AG04449 (cell line): ENCODE measurements at regions of chr5 and their contacts with region 1.

Region 1: GRCh38 chr5:82364497-82364896 is 86.3 kb upstream of the RPS23 start:
- DNase-seq: peak; percentile 34
- H3K4me3 ChIP-seq: no peak overlapping the region
- CTCF ChIP-seq: peak; percentile 59

Region 2: GRCh38 chr5:82375531-82376244 is 11.2 kb after region 1 on chr5:
- CTCF ChIA-PET with region 1: interaction called, 11 read pairs
- POLR2A ChIA-PET with region 1: interaction called, 4 read pairs
- DNase-seq: no peak
- H3K4me3 ChIP-seq: no peak overlapping the region
- CTCF ChIP-seq: no peak

Region 3: DNA sequence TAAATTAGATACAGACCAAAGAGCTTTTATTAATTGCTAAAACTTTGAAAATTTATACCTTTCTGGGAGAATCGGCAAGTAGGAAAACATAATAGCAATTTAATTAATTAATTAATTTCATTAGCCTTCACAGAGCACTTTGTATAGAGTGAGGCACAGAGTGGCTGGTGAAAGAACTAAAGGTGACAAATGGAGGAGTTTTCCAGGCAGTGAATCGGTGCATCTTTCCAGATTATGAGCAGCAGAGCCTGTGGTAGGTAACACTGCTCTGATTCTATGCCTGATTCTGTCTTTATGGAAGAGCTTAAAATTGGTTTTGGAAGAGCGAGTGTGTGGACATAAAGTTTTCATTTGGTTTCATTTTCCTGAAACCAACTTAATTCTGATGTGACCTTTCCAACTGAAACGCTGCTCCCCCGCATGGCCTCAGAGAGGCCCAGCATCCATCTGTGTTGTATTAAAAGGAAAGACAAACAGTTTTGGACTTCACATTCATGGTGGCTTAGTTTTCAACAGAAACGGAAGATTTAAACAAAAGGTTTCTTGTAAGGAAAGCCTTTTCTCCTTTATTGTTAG is 102.6 kb after region 1 on chr5:
- CTCF ChIA-PET with region 1: interaction called, 13 read pairs
- POLR2A ChIA-PET with region 1: no interaction called
- DNase-seq: no peak
- H3K4me3 ChIP-seq: no peak overlapping the region; the same call in 1 of the 2 replicates
- CTCF ChIP-seq: no peak

Region 4: DNA sequence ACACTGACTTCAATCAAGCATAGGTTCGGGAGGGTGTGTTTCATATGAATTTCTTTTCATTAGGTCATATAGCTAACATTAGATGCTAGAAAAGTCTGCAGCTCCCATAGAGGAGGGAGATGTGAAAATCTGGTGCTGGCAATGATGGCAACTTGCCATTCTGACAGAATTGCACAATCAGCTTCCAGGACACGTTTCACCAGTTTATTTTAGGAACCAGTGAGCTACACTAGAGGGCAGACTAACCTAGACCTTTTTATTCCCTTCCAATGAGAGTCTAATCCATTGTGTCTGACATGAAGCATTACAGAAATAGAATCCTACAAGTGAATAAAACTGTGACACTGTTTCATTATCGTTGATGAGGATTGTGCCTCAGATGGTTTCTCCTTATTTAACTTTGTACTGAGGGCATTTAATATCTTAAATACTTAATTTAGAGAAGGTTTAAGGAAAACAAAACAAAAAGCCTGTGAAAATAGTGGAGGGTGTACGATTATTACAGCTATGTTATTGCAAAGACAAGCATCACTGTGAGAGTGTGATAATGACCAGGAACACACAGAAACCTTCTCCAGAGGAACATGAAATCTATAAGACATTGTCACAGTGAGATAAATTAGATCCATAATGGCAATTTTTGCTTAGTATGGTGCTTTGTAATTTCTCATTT is 277.0 kb after region 1 on chr5:
- CTCF ChIA-PET with region 1: interaction called, 16 read pairs
- POLR2A ChIA-PET with region 1: no interaction called
- DNase-seq: peak; percentile 56
- H3K4me3 ChIP-seq: no peak overlapping the region
- CTCF ChIP-seq: peak; percentile 41